CD4-positive, alpha-beta memory T cell (primary cell): ENCODE measurements at regions of chr17 and their contacts with region 1.

Region 1: DNA sequence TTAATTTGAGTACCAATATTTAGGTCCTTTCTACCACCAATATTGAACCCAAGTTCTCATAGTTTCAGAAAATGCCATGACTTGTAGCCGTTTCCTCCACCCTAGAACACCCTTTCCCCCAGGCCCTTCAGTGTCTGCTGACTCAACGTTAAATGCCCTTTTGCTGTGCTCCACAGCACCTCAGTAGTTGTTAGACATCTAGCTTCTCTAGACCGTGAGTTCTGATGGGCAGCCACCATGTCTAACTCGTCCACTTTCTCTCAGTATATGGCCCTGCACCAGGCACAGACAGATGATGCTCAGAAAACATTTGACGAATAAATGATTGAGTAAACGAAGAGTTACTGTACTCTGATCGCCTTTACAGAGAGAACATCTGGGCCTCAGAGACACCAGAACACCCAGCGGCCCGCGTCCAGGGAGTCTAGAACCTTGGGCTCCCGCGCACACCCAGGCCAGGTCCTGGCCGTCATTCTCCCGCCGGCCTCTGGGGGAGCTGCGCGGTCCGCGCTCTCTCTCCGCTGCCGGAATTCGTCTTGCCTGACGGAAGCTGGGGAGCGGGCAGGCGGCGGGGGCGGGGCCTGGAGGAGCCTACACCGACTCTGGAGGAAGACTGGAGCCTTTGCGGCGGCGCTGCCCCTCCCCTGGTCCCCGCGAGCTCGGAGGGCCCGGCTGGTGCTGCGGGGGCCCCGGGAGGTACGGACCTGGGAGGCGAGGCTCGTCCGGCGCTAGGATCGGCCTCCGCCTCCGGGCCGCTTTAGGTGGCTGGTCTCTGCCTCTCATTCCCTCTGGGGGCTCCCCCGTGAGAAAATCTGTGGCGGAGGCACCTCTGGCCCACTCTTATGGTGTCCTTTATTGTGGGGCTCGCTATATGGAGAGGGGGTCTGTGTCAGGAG is at the start of gene NKIRAS2:
- DNase-seq: peak; percentile 90 to 96 (median 90)
- H3K4me3 ChIP-seq: peak within 1 kb of the TSS; percentile 44 to 79
- H3K4me3 Mint-ChIP-seq: peak within 1 kb of the TSS; percentile 88 to 100 (median 96)
- H3K27ac ChIP-seq: peak within 1 kb of the TSS; percentile 84
- H3K27ac Mint-ChIP-seq: peak within 1 kb of the TSS; percentile 79 to 93 (median 88)
- H3K4me1 ChIP-seq: peaks cover 54% of the 10 kb centered on the region
- H3K4me1 Mint-ChIP-seq: peaks cover 34 to 66% (median 50%) of the 10 kb centered on the region in 4 donors
- H3K27me3 ChIP-seq: no peaks in the 10 kb centered on the region
- H3K27me3 Mint-ChIP-seq: no peaks in the 10 kb centered on the region
- total RNA-seq, gene NKIRAS2: 19.7 TPM

Region 2: GRCh38 chr17:40818733-40819527 is 1200.8 kb before region 1 on chr17:
- CTCF ChIA-PET with region 1: no interaction called
- POLR2A ChIA-PET with region 1: interaction called, 4 read pairs
- intact Hi-C with region 1: loop called (anchors 5 kb)
- DNase-seq: peak; percentile 82 to 87 (median 84)
- H3K4me3 ChIP-seq: peak overlapping the region; percentile 65 to 83
- H3K4me3 Mint-ChIP-seq: peak overlapping the region; percentile 84 to 97 (median 94)
- H3K27ac ChIP-seq: peak overlapping the region; percentile 62
- H3K27ac Mint-ChIP-seq: peak overlapping the region; percentile 86 to 97 (median 94)
- H3K4me1 ChIP-seq: peaks cover 22% of the 10 kb centered on the region
- H3K4me1 Mint-ChIP-seq: peaks cover 5 to 31% (median 15%) of the 10 kb centered on the region in 4 donors
- H3K27me3 ChIP-seq: no peaks in the 10 kb centered on the region
- H3K27me3 Mint-ChIP-seq: peaks cover 6 to 12% of the 10 kb centered on the region in 2 donors

Region 3: GRCh38 chr17:41918314-41919164 is 101.2 kb before region 1 on chr17 and contains the start of gene ACLY:
- CTCF ChIA-PET with region 1: no interaction called
- POLR2A ChIA-PET with region 1: interaction called, 10 read pairs
- intact Hi-C with region 1: loop called (anchors 1 kb)
- DNase-seq: peak; percentile 93 to 94 (median 93)
- H3K4me3 ChIP-seq: peak within 1 kb of the TSS; percentile 78 to 97
- H3K4me3 Mint-ChIP-seq: peak within 1 kb of the TSS; percentile 87 to 96 (median 90)
- H3K27ac ChIP-seq: peak within 1 kb of the TSS; percentile 88
- H3K27ac Mint-ChIP-seq: peak within 1 kb of the TSS; percentile 76 to 93 (median 87)
- H3K4me1 ChIP-seq: peaks cover 48% of the 10 kb centered on the region
- H3K4me1 Mint-ChIP-seq: peaks cover 23 to 46% (median 33%) of the 10 kb centered on the region in 4 donors
- H3K27me3 ChIP-seq: no peaks in the 10 kb centered on the region
- H3K27me3 Mint-ChIP-seq: no peaks in the 10 kb centered on the region
- total RNA-seq, gene ACLY: 84.4 to 88.5 TPM

Region 4: DNA sequence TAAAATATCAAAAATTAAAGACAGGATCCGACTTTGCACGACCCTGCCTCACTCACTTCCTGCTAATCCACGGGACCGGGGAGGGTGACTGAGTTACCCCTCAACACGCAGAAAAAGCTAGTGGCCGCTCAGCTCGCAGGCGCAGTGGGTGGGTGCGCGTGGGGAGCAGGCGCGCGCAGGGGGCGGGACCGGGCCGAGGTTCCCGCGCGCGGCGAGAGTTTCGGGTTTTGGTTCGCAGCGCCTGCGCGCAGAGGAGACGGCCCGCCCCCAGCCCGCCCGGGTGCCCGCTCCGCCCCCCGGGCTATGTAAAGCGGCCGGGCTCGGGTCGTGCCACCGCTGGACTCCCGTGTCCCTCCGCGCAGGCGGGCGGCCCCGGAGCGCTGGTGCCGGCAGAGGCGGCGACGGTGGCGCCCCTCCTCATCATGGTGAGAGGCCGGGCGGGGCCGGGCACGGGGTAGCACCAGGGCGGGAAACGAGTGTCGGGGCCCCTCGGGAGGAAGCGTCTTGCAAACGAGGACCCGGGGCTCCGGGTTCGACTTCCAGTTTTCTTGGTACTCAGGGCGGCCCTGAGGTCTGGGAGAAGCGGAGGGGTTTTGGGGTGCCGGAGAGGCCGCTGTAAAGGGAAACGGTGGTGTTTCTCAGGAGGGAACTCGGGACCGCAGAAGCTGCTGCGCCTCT is 53.2 kb before region 1 on chr17 and contains the start of gene CNP:
- CTCF ChIA-PET with region 1: interaction called, 45 read pairs
- POLR2A ChIA-PET with region 1: interaction called, 70 read pairs
- intact Hi-C with region 1: loop called (anchors 1 kb)
- DNase-seq: peak; percentile 87 to 90 (median 89)
- H3K4me3 ChIP-seq: peak within 1 kb of the TSS; percentile 68 to 69
- H3K4me3 Mint-ChIP-seq: peak within 1 kb of the TSS; percentile 83 to 93 (median 87)
- H3K27ac ChIP-seq: peak within 1 kb of the TSS; percentile 83
- H3K27ac Mint-ChIP-seq: peak within 1 kb of the TSS; percentile 87 to 98 (median 91)
- H3K4me1 ChIP-seq: peaks cover 43% of the 10 kb centered on the region
- H3K4me1 Mint-ChIP-seq: peaks cover 20 to 42% (median 31%) of the 10 kb centered on the region in 4 donors
- H3K27me3 ChIP-seq: no peaks in the 10 kb centered on the region
- H3K27me3 Mint-ChIP-seq: no peaks in the 10 kb centered on the region
- total RNA-seq, gene CNP: 31.0 to 36.9 TPM

Region 5: DNA sequence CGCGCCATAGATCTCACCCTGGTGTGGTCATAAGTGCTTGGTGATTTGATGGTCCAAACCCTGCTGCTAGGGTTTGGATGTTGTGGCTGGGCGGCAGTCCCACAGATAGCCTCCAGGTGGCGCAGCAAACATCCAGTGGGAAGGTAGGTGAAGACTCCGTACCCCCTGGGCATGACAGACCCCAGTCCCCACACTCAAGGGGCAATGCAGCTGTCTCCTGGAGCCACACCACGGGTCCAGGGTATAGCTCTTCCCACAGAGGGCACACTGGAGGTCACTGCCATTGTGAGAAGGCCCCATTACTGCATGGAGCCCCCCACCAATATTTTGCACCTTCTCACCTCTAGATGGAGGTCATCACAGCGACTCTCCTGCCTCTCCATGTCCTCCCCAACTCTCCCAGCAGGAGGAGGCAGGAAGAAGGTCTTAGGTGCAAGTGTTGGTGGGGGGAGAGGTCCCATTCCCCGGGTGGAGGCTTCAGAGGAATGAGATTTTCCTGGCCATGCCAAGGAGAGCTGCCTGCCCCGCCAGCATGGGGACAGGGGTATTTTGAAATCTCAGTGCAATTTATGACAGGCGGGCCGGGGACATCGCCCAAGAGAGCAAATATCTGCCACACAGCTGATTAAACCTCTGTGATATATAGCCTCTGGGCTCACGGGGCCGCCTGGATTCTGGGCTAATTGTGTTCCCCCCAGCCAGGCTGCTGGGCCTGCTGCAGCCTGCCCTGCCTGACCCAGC is 47.8 kb after region 1 on chr17:
- CTCF ChIA-PET with region 1: interaction called, 10 read pairs
- POLR2A ChIA-PET with region 1: no interaction called
- intact Hi-C with region 1: no loop called
- DNase-seq: peak; percentile 48 to 66 (median 59)
- H3K4me3 ChIP-seq: no peak overlapping the region
- H3K4me3 Mint-ChIP-seq: no peak overlapping the region
- H3K27ac ChIP-seq: no peak overlapping the region
- H3K27ac Mint-ChIP-seq: no peak overlapping the region
- H3K4me1 ChIP-seq: peaks cover 18% of the 10 kb centered on the region
- H3K4me1 Mint-ChIP-seq: peaks cover 2 to 8% (median 6%) of the 10 kb centered on the region in 4 donors
- H3K27me3 ChIP-seq: peaks cover 13% of the 10 kb centered on the region
- H3K27me3 Mint-ChIP-seq: peaks cover 8 to 15% of the 10 kb centered on the region in 2 donors

Region 6: DNA sequence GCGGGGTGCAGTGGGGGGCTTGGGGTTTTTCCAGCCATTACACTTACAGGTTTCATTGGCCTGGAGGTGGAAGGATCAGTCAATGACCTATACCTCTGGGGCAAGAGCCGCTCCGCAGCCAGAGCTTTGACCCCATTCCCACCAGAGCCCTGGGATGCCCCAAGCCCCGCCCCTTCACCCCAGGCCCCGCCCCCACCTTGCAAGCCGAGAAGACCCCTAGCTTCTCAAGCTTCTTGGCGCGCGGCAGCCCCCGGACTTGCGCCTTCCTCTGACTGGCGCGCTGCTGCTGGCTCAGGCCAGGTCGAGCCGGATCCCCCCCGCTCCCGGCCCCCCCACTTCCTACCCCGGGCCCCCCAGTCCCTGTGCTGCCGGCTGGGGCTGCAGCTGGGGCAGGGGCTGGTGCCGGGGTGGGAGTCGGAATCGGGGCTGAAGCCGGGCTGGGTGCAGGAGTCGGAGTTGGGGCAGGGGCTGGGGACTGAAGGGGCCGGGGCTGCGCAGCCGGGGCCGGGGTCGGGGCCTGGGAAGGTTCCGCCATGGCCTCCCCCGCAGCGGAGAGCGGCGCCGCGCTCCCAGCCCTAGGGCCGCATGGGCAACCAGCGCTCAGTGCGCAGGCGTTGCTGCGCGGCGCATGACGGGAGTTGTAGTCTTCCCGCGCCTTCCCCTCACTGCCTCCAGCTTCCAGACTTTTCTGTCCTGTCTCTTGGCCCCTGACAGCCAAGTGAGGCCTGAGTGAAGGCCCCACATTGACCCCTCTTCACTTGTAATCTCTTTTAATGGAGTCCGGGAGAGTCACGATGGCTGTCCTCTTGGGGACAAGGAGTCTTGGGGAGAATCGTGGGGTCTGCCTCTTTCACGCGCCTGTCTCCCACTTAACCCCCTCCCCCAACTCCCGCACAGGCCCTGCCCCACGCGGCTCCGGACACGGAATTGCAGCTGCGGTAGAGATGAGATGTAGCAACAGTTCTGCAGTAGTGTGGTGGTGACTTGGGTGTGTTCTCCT is 101.3 kb after region 1 on chr17 and contains the start of gene KAT2A:
- CTCF ChIA-PET with region 1: interaction called, 58 read pairs
- POLR2A ChIA-PET with region 1: interaction called, 28 read pairs
- intact Hi-C with region 1: no loop called
- DNase-seq: peak; percentile 61 to 71 (median 68)
- H3K4me3 ChIP-seq: peak within 1 kb of the TSS in 1 of 2 donors; percentile 43
- H3K4me3 Mint-ChIP-seq: peak within 1 kb of the TSS; percentile 72 to 82 (median 77)
- H3K27ac ChIP-seq: peak within 1 kb of the TSS; percentile 49
- H3K27ac Mint-ChIP-seq: peak within 1 kb of the TSS in 6 of 7 donors; percentile 19 to 81 (median 67)
- H3K4me1 ChIP-seq: peaks cover 11% of the 10 kb centered on the region
- H3K4me1 Mint-ChIP-seq: peaks cover 13 to 34% (median 23%) of the 10 kb centered on the region in 4 donors
- H3K27me3 ChIP-seq: no peaks in the 10 kb centered on the region
- H3K27me3 Mint-ChIP-seq: no peaks in the 10 kb centered on the region
- total RNA-seq, gene KAT2A: 38.5 to 39.9 TPM